IMR-90 (cell line): ENCODE measurements at regions of chr13 and their contacts with region 1.

Region 1: DNA sequence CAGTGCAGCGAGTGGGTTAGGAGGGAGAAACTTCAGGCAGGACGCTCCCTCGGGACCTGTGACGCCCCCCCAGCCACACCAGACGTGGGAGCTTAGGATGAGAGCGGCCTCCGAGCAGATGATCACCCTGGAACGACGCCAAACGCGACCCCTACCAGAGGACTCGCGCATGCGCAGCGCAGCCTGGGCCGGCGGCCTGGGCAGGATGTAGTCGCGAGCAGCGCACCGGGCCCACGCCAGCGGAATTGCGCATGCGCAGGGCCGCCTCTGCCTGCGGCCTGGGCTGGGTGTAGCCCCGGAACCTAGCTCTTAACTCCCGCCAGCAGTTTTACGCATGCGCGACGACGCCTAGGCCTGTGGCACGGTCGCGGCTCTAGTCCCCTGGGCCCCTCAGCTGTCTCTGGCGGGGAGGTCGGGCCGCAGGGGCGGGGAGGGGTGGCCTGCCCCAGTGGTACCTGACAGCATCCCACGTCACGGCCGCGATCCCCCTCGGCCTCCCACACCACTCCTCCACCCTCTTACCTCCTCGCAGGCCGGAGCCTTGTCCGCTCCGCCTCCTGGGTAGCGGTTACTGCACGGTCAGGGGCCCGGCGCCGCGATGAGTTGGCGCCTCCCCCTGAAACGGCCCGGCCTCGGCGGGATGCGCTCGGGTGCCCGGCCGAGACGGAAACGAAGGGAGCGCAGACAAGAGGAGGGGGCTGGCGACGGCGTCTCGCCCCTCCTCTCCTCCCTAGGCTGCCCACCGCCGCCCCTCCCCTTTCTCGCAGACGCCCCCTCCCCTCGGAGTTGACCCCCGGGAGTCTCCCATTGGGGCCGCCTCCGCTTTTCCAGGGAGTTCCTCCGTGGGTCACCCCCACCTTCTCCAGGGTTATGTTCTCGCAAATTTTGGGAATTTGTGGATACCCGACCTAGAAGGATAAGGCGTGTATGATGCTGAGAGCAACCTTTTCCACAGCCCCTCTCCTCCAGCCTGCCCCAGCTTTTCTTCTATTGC is at the start of gene RCBTB2:
- DNase-seq: peak; percentile 96
- ATAC-seq: peak; percentile 97
- H3K4me3 ChIP-seq: peak within 1 kb of the TSS; percentile 86
- H3K27ac ChIP-seq: peak within 1 kb of the TSS; percentile 96
- H3K4me1 ChIP-seq: peaks cover 5% of the 10 kb centered on the region
- H3K27me3 ChIP-seq: no peaks in the 10 kb centered on the region
- CTCF ChIP-seq: no peak
- POLR2A ChIP-seq: peak; percentile 86
- RAD21 ChIP-seq: no peak
- total RNA-seq, gene RCBTB2: 5.2 and 5.3 TPM in 2 replicates

Region 2: GRCh38 chr13:48405875-48406274 is 126.9 kb before region 1 on chr13:
- CTCF ChIA-PET with region 1: no interaction called
- POLR2A ChIA-PET with region 1: no interaction called
- dilution Hi-C with region 1: no loop called
- in situ Hi-C with region 1: no loop called
- intact Hi-C with region 1: loop called (anchors 5 kb)
- DNase-seq: peak; percentile 36
- ATAC-seq: no peak
- H3K4me3 ChIP-seq: no peak overlapping the region
- H3K27ac ChIP-seq: no peak overlapping the region
- H3K4me1 ChIP-seq: peaks cover 3% of the 10 kb centered on the region; the same call in 1 of the 2 replicates
- H3K27me3 ChIP-seq: no peaks in the 10 kb centered on the region
- CTCF ChIP-seq: no peak
- POLR2A ChIP-seq: no peak
- RAD21 ChIP-seq: no peak